ENCODE measurements at regions of chr12 and their contacts with region 1.

Region 1: DNA sequence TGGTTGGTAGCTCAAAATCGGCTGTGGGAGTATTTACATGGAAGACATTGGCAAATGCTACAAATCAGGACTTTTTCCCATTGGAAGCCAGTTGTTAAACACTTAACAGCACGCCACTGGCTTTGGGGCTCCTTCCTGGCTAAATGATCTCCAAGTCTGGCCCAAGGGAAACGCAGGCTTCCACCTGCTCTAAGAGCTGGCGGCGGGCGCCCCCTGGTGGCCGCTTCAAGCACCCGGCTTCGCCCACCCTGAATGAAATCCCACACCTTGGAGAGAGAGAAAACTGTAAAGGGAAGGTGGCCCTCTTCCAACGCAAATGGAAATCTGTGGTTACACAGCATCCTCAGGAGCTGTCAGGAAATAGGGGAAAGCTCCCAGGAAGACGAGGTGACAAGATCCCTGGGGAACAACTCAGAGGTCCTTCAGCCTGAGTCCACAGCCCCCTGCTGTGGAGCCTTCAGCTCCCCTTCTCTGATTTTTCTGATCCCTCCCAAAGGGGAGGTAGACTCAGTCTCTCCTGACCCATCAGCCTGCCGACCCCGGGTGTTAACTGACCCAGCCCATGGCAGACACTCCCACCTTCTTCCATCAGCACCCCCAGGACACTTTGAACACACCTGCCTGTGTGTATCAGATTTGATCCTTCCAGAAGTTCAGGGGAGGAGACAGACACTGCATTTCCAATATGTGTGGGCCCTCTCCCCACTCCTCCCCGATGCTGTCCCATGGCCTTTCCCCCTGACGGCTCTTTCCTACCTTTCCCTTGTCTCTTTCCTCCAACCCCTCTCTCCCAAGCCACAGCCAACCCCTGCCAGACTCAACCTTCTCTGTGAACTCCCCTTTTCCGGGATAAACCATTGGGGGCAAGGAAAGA is 15.4 kb downstream of the SELPLG start:
- DNase-seq: peak; percentile 58 to 69
- ATAC-seq: peak; percentile 81 to 88
- H3K4me3 ChIP-seq: no peak overlapping the region
- H3K27ac ChIP-seq: no peak overlapping the region
- H3K4me1 ChIP-seq: no peaks in the 10 kb centered on the region
- H3K27me3 ChIP-seq: no peaks in the 10 kb centered on the region
- CTCF ChIP-seq: peak; percentile 87 to 98 (median 95)
- POLR2A ChIP-seq: no peak

Region 2: GRCh38 chr12:107679336-107679735 is 939.0 kb before region 1 on chr12:
- in situ Hi-C with region 1: no loop called
- intact Hi-C with region 1: loop called (anchors 5 kb)
- DNase-seq: no peak
- ATAC-seq: no peak
- H3K4me3 ChIP-seq: no peak overlapping the region
- H3K27ac ChIP-seq: no peak overlapping the region
- H3K4me1 ChIP-seq: no peaks in the 10 kb centered on the region
- H3K27me3 ChIP-seq: peaks cover 0 to 4% (median 0%) of the 10 kb centered on the region in 3 donors
- CTCF ChIP-seq: no peak
- POLR2A ChIP-seq: no peak

Region 3: DNA sequence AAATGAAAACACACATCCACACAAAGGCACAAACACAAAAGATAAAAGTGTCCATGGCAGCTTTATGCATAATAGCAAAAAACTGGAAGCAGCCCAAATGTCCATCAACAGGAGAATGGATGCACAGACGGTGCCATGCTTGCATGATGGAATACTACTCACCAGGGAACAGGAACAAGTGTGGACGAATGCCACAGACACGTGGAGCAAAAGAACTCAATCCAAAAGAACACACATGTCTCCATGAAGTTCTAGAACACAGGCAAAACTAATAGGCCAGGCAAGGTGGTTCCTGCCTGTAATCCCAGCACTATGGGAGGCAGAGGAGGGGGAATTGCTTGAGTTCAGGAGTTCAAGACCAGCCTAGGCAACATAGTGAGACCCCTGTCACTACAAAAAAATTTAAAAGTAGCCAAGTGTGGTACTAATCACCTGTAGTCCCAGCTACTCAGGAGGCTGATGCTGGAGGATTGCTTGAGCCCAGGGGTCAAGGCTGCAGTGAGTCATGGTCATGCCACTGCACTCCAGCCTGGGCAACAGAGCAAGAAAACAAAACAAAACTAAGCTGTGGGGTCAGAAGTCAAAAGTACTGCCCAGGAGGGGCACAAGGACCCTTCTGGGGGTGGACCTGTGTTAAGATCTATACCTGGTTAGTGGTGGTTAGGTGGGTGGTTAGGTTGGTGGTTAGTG is 13.2 kb before region 1 on chr12:
- in situ Hi-C with region 1: no loop called
- intact Hi-C with region 1: no loop called
- DNase-seq: no peak
- ATAC-seq: no peak
- H3K4me3 ChIP-seq: no peak overlapping the region
- H3K27ac ChIP-seq: no peak overlapping the region
- H3K4me1 ChIP-seq: no peaks in the 10 kb centered on the region
- H3K27me3 ChIP-seq: no peaks in the 10 kb centered on the region
- CTCF ChIP-seq: no peak
- POLR2A ChIP-seq: no peak

Region 4: DNA sequence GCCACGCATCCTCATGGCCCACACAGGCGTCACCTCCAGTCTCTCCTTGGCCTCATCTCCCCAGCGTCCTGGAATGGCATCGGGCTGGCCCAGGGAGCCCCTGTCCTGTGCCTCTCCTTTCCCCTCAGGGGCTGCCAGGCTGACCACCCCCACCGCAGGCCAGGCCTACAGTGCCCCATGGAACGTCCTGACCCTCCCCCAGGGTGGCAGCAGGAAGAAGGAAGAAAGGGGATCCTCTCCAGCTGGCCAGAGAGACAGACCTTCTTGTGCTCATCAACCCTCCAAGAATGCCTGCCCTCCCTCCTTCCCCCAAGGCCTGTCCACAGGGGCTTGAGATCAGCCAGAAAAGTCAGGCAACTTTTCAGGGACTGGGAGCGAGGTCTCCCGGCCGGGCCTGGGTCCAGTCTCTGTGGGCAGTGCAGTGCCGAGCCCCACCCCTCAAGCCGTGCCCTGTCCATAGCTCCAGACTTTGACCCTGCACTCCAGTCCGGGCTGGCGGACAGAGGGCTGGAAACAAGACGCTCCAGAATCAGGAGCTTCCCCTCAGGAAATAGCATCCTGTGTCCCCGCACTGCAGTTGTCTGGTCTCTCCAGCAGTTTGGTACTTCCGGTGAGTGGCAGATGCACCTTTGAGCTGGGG is 261.4 kb after region 1 on chr12 and contains the start of gene DAO:
- in situ Hi-C with region 1: no loop called
- intact Hi-C with region 1: no loop called
- DNase-seq: no peak
- ATAC-seq: no peak
- H3K4me3 ChIP-seq: no peak within 1 kb of the TSS
- H3K27ac ChIP-seq: no peak within 1 kb of the TSS
- H3K4me1 ChIP-seq: no peaks in the 10 kb centered on the region
- H3K27me3 ChIP-seq: no peaks in the 10 kb centered on the region
- CTCF ChIP-seq: no peak
- POLR2A ChIP-seq: no peak
- total RNA-seq, gene DAO: not detected